SK-N-SH (cell line): ENCODE measurements at regions of chr16 and their contacts with region 1.

Region 1: DNA sequence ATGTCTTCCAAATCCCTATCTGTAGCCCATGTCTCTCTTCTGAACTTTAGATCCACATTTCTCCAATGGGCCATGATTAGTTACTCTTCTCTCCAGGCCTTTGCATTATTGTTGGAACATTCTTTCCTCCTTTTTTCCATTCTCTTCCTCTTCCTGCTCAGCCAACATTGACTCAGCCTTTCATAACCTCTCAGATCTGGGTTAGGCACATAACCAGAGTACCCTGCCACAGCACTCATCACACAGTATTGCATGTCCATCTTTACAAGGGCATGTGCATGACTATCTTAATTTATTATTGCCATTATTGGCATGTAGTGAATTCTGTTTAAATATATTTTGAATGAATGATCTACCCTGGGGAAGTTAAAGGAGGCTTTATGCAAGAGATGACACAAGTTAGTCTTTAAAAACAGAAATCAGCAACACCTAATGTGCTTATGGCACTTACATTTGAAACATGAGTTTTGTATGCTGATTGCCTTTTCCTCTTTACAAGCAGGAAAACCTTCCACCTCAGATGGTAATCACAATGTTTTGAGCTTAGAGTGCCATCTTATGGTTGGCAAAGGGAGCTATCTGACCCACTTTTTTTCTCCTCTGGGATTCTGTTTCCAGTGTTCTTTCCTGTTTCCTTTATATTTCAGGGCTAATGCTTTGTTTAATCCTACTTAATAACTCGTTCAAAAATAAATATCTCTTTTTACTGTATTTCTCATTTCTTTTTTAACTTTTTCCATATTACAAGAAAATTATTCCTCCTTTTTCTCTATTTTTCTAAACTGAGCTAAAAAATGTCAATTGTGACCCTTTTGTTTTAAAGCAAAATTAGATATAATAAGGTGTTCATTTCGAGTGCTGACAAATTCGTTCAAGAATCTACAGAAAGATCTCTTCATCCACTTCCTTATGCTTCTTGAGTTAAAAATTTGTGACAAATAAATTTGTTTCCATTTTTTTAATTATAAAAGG is 151.0 kb upstream of the RBL2 start:
- DNase-seq: peak; percentile 51
- H3K4me3 ChIP-seq: no peak overlapping the region
- H3K27ac ChIP-seq: no peak overlapping the region; a peak in 1 of 4 replicates
- H3K4me1 ChIP-seq: no peaks in the 10 kb centered on the region; a peak in 1 of 4 replicates
- H3K27me3 ChIP-seq: no peaks in the 10 kb centered on the region
- CTCF ChIP-seq: peak; percentile 77
- EP300 ChIP-seq: no peak
- RAD21 ChIP-seq: peak; percentile 79

Region 2: DNA sequence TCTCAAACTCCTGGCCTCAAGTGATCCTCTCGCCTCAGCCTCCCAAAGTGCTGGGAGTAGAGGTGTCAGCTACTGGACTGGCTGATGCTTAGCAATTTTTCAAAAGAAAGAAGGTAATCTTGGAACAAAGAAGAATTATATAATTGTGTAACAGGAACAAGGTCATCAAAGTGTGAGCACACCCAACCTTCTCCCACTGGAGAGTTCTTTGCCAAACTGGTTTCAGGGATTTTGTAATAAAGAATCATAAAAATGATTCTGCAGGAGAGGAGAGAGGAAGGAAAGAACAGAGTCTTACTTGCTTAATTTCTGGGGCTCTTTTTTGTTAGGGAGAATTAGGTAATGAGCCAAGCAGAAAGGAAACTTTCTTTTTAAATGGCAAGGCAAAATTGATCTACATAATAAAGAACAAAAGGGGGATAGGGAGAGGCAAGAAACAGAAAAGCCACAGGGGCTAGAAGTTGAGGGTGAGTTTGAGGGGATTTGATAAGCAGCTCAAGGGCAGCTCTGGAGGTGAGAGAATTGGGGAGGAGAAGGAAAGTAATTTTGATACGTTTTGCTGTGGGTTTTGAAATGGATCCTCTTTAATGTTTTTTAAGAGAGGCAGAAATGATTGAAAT is 251.8 kb before region 1 on chr16:
- CTCF ChIA-PET with region 1: no interaction called
- POLR2A ChIA-PET with region 1: no interaction called
- DNase-seq: no peak
- H3K4me3 ChIP-seq: no peak overlapping the region
- H3K27ac ChIP-seq: no peak overlapping the region
- H3K4me1 ChIP-seq: no peaks in the 10 kb centered on the region
- H3K27me3 ChIP-seq: no peaks in the 10 kb centered on the region
- CTCF ChIP-seq: no peak
- EP300 ChIP-seq: no peak
- RAD21 ChIP-seq: no peak

Region 3: GRCh38 chr16:53130159-53131049 is 152.9 kb before region 1 on chr16:
- CTCF ChIA-PET with region 1: no interaction called
- POLR2A ChIA-PET with region 1: no interaction called
- DNase-seq: peak; percentile 99
- H3K4me3 ChIP-seq: peak overlapping the region; percentile 68 to 83
- H3K27ac ChIP-seq: peak overlapping the region; percentile 86 to 91
- H3K4me1 ChIP-seq: peaks cover 9 to 14% of the 10 kb centered on the region in 2 experiments; a peak in 3 of 4 replicates
- H3K27me3 ChIP-seq: no peaks in the 10 kb centered on the region
- CTCF ChIP-seq: no peak; the same call in 1 of the 2 replicates
- EP300 ChIP-seq: no peak
- RAD21 ChIP-seq: peak; percentile 70

Region 4: GRCh38 chr16:53266156-53266555 is 17.1 kb before region 1 on chr16:
- CTCF ChIA-PET with region 1: interaction called, 13 read pairs
- POLR2A ChIA-PET with region 1: no interaction called
- DNase-seq: no peak
- H3K4me3 ChIP-seq: no peak overlapping the region
- H3K27ac ChIP-seq: peak overlapping the region in 1 of 2 experiments; percentile 28; a peak in 2 of 4 replicates
- H3K4me1 ChIP-seq: peaks cover 0 to 8% of the 10 kb centered on the region in 2 experiments; a peak in 1 of 4 replicates
- H3K27me3 ChIP-seq: no peaks in the 10 kb centered on the region
- CTCF ChIP-seq: no peak
- EP300 ChIP-seq: no peak
- RAD21 ChIP-seq: no peak

Region 5: GRCh38 chr16:53297477-53297876 is 14.2 kb after region 1 on chr16:
- CTCF ChIA-PET with region 1: interaction called, 12 read pairs
- POLR2A ChIA-PET with region 1: no interaction called
- DNase-seq: no peak
- H3K4me3 ChIP-seq: no peak overlapping the region
- H3K27ac ChIP-seq: no peak overlapping the region
- H3K4me1 ChIP-seq: no peaks in the 10 kb centered on the region
- H3K27me3 ChIP-seq: no peaks in the 10 kb centered on the region
- CTCF ChIP-seq: no peak
- EP300 ChIP-seq: no peak
- RAD21 ChIP-seq: no peak

Region 6: DNA sequence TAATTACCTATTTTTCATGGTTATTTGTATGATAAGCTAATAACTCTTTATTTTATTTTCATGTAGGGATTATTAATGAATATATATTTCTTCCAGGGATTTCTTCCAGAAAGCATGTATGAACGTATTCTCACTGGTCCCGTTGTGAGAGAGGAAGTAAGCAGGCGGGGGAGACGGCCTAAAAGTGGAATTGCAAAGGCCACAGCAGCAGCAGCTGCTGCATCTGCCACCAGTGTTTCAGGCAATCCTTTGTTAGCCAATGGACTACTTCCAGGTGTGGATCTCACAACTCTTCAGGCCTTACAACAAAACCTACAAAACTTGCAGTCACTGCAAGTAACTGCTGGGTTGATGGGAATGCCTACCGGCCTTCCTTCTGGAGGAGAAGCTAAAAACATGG is 40.7 kb after region 1 on chr16:
- CTCF ChIA-PET with region 1: no interaction called
- POLR2A ChIA-PET with region 1: no interaction called
- DNase-seq: no peak
- H3K4me3 ChIP-seq: no peak overlapping the region
- H3K27ac ChIP-seq: no peak overlapping the region
- H3K4me1 ChIP-seq: no peaks in the 10 kb centered on the region
- H3K27me3 ChIP-seq: no peaks in the 10 kb centered on the region
- CTCF ChIP-seq: no peak
- EP300 ChIP-seq: no peak
- RAD21 ChIP-seq: no peak